Motor neuron (in vitro differentiated cells): ENCODE measurements at regions of chr3 and their contacts with region 1.

Region 1: GRCh38 chr3:181694805-181695660 is 16.7 kb upstream of the SOX2 start:
- ATAC-seq: peak in 6 of 8 experiments; percentile 33 to 86 (median 46)
- H3K4me3 ChIP-seq: peak overlapping the region in 3 of 5 donors; percentile 16 to 26 (median 22)
- H3K27ac ChIP-seq: no peak overlapping the region
- H3K4me1 ChIP-seq: peaks cover 41 to 48% of the 10 kb centered on the region in 2 donors

Region 2: GRCh38 chr3:181210275-181210674 is 484.8 kb before region 1 on chr3:
- in situ Hi-C with region 1: loop called in 2 of 9 experiments (anchors 10 to 25 kb)
- ATAC-seq: no peak
- H3K4me3 ChIP-seq: no peak overlapping the region
- H3K27ac ChIP-seq: no peak overlapping the region
- H3K4me1 ChIP-seq: no peaks in the 10 kb centered on the region